AG04450 (cell line): ENCODE measurements at regions of chr1 and their contacts with region 1.

Region 1: GRCh38 chr1:151254217-151255213 is at the start of gene PSMD4:
- DNase-seq: peak; percentile 88
- H3K4me3 ChIP-seq: peak within 1 kb of the TSS; percentile 84
- H3K27ac ChIP-seq: peak within 1 kb of the TSS; percentile 83
- H3K27me3 ChIP-seq: no peaks in the 10 kb centered on the region
- CTCF ChIP-seq: no peak
- polyA plus RNA-seq, gene PSMD4: 258 and 275 TPM in 2 replicates

Region 2: DNA sequence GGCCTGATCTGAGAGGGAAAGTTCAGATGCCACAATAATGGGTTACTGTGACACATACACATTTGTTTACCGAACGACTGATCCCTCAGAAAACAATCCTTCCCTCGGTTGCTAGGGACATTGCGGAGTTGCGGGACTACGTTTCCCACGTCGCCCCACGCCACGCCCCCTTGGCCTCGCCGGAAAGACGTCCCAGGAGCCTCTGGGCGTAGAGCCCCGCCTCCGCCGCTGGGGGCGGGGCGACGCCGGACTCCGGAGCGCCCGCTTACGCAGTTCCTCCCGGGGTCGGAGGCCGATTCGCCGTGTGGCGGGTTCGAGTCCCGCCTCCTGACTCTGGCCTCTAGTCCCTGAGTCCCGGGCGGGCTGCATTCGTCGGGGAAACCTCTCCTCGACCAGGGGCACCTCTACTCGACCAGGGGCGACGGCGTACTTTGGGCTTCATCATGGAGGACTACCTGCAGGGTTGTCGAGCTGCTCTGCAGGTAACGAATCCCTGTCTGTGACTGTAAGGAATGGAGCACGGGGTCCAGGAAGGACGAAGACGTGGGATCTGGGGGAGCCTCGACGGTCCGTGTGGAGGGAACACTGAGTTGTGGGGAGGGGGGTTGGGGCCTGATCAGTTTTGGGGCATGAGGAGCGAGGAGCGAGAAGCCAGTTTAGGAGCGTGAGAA is 246.2 kb before region 1 on chr1 and contains the start of gene PRUNE1:
- CTCF ChIA-PET with region 1: no interaction called
- POLR2A ChIA-PET with region 1: no interaction called
- DNase-seq: peak; percentile 88
- H3K4me3 ChIP-seq: peak within 1 kb of the TSS; percentile 96
- H3K27ac ChIP-seq: peak within 1 kb of the TSS; percentile 82
- H3K27me3 ChIP-seq: no peaks in the 10 kb centered on the region
- CTCF ChIP-seq: no peak
- polyA plus RNA-seq, gene PRUNE1: 18.3 and 21.7 TPM in 2 replicates

Region 3: GRCh38 chr1:151175910-151176309 is 78.6 kb before region 1 on chr1 and contains the start of gene TMOD4:
- CTCF ChIA-PET with region 1: interaction called, 10 read pairs
- POLR2A ChIA-PET with region 1: no interaction called
- DNase-seq: no peak
- H3K4me3 ChIP-seq: no peak within 1 kb of the TSS
- H3K27ac ChIP-seq: peak within 1 kb of the TSS; percentile 39
- H3K27me3 ChIP-seq: no peaks in the 10 kb centered on the region
- CTCF ChIP-seq: peak; percentile 75
- polyA plus RNA-seq, gene TMOD4: not detected in 2 replicates

Region 4: DNA sequence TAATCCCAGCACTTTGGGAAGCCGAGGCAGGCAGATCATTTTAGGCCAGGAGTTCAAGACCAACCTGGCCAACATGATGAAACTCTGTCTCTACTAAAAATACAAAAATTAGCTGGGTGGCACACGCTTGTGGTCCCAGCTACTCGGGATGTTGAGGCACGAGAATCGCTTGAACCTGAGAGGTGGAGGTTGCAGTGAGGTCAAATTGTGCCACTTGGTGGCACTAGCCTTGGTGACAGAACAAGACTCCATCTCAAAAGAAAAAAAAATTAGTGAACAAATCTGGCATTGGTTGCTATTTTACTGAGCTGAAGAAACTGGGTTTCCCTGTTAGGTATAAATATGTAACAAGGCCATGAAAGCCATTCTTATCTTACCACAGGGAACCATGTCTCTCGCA is 26.9 kb before region 1 on chr1:
- CTCF ChIA-PET with region 1: interaction called, 12 read pairs
- POLR2A ChIA-PET with region 1: no interaction called
- DNase-seq: no peak
- H3K4me3 ChIP-seq: no peak overlapping the region
- H3K27ac ChIP-seq: no peak overlapping the region
- H3K27me3 ChIP-seq: no peaks in the 10 kb centered on the region
- CTCF ChIP-seq: no peak

Region 5: GRCh38 chr1:151243683-151244216 is 10.8 kb before region 1 on chr1:
- CTCF ChIA-PET with region 1: interaction called, 21 read pairs
- POLR2A ChIA-PET with region 1: no interaction called
- DNase-seq: no peak
- H3K4me3 ChIP-seq: no peak overlapping the region
- H3K27ac ChIP-seq: no peak overlapping the region
- H3K27me3 ChIP-seq: no peaks in the 10 kb centered on the region
- CTCF ChIP-seq: no peak

Region 6: DNA sequence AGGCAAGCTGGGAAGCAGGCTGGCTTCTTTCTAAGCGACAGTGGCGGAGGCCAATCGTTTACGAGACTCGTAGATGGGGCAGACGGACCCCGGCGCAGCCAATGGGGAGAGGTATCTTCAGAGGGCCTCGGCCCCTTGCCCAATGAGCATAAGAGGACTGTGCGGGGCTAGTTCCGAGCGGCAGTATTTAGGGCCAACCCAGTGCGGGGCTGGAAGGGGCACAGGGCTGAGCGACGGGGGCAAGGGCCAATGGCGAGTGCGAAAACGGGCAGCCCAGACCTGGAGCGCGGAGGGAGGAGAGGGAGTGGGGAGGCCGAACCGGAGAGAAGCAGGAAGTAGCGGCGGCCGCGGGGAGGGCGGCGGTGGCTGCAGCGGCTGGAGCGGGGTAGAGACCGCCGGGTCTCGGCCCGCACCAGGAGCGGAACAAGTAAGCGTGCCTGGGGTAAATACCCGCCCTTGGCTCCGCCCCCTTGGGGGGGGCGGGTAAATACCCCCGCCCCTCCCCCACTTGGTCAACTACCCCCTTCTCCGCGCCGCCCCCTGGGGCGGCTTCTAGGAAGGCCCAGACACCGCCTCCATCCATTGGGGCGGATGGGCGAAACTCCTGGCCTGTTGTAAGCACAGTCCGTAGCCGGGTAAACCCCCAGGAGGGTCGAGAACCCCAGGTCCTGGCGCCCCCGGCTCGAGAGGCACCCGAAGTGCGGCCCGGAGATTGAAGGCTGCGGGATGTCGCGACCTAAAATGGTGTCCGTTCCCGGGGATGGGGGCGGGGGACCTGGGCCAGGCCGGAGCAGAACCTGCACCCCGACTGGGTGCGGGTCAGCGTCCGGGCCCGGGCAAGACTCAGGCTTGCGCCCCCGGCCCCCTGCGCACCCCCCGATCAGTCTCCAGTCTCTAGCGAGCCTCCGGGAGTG is 27.7 kb after region 1 on chr1 and contains the start of gene ZNF687:
- CTCF ChIA-PET with region 1: interaction called, 7 read pairs
- POLR2A ChIA-PET with region 1: interaction called, 10 read pairs
- DNase-seq: peak; percentile 100
- H3K4me3 ChIP-seq: peak within 1 kb of the TSS; percentile 98
- H3K27ac ChIP-seq: peak within 1 kb of the TSS; percentile 100
- H3K27me3 ChIP-seq: peaks cover 3% of the 10 kb centered on the region
- CTCF ChIP-seq: no peak
- polyA plus RNA-seq, gene ZNF687: 10.5 and 12.0 TPM in 2 replicates